WTC11 (cell line): ENCODE measurements at regions of chr6 and their contacts with region 1.

Region 1: GRCh38 chr6:26216356-26216885 is 129.2 kb downstream of the HFE start:
- DNase-seq: no peak
- ATAC-seq: peak; percentile 53
- H3K4me3 Mint-ChIP-seq: no peak overlapping the region
- H3K27ac Mint-ChIP-seq: no peak overlapping the region
- H3K4me1 Mint-ChIP-seq: peaks cover 36% of the 10 kb centered on the region
- H3K27me3 Mint-ChIP-seq: no peaks in the 10 kb centered on the region
- CTCF ChIP-seq: no peak

Region 2: DNA sequence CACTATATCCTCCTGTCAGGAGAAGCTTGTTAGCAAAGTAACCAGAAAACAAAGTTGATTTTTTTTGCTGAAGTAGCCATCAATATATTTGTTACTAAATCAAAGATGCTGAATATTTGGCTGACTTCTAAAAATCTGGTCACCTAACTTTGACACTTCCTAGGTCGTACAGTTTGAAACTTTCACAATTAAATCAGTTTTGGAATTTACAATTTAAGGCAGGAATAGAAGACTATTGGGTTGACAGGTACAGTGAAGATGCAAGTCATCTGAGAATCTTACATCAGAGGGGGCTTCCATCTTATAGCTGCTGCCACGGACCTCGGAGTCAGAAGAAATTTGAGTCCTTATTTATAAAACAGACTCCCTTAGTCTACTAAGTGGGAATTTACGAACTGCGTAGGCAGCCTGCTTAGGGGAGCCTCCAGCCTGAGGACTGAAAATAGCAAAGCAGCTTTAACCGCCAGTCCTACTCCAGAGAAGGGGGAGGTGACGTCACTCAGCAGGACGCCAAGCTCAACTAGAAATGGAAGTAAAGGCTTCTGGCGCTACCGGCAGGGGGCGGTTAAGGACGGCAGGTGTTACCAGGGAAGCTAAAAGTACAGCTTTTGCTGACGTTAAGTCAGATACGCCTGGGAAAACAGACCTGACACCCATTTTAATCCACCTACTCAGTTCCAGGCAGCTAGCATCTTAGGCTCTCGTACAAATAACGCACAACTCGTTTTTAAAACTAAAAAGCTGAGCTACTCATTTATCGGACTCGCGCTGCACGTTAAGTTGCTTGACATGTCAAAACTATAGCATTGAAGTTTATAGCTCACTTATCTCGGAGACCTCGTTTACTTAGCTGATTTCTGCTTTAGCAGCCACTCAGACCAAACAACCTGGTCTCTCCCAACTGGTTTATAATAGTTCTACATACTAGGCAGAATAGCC is 190.3 kb before region 1 on chr6:
- CTCF ChIA-PET with region 1: no interaction called
- POLR2A ChIA-PET with region 1: interaction called, 116 read pairs
- DNase-seq: peak; percentile 95
- ATAC-seq: peak; percentile 12
- H3K4me3 Mint-ChIP-seq: peak overlapping the region; percentile 92
- H3K27ac Mint-ChIP-seq: peak overlapping the region; percentile 98
- H3K4me1 Mint-ChIP-seq: peaks cover 73% of the 10 kb centered on the region
- H3K27me3 Mint-ChIP-seq: no peaks in the 10 kb centered on the region
- CTCF ChIP-seq: peak; percentile 60

Region 3: GRCh38 chr6:26103770-26104456 is 112.5 kb before region 1 on chr6:
- CTCF ChIA-PET with region 1: no interaction called
- POLR2A ChIA-PET with region 1: interaction called, 28 read pairs
- DNase-seq: peak; percentile 73
- ATAC-seq: peak; percentile 79
- H3K4me3 Mint-ChIP-seq: peak overlapping the region; percentile 84
- H3K27ac Mint-ChIP-seq: peak overlapping the region; percentile 98
- H3K4me1 Mint-ChIP-seq: peaks cover 23% of the 10 kb centered on the region
- H3K27me3 Mint-ChIP-seq: no peaks in the 10 kb centered on the region
- CTCF ChIP-seq: no peak

Region 4: DNA sequence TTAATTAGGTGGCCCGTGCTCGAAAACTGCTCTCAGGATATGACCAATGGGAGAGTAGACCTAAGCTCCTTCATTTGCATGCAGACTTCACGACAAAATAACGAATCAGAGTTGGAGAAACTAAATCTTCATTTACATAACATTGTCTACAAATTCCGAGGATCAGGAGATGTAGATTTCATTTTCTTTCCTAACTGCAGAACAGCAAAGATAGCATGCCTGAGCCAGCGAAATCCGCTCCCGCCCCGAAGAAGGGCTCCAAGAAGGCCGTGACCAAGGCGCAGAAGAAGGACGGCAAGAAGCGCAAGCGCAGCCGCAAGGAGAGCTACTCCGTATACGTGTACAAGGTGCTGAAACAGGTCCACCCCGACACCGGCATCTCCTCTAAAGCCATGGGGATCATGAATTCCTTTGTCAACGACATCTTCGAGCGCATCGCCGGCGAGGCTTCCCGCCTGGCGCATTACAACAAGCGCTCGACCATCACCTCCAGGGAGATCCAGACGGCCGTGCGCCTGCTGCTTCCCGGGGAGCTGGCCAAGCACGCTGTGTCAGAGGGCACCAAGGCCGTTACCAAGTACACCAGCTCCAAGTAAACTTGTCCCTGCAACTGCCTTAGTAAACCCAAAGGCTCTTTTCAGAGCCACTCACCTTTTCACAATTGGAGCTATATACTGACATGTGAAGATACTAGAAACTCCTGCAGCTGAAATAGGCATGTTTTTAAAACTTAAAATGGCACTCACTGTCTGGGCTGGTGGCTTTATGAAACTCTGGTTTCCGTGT is 32.6 kb before region 1 on chr6:
- CTCF ChIA-PET with region 1: no interaction called
- POLR2A ChIA-PET with region 1: interaction called, 240 read pairs
- DNase-seq: peak; percentile 74
- ATAC-seq: peak; percentile 78
- H3K4me3 Mint-ChIP-seq: peak overlapping the region; percentile 90
- H3K27ac Mint-ChIP-seq: peak overlapping the region; percentile 99
- H3K4me1 Mint-ChIP-seq: peaks cover 45% of the 10 kb centered on the region
- H3K27me3 Mint-ChIP-seq: no peaks in the 10 kb centered on the region
- CTCF ChIP-seq: no peak

Region 5: GRCh38 chr6:26240154-26241032 is 24.0 kb after region 1 on chr6:
- CTCF ChIA-PET with region 1: no interaction called
- POLR2A ChIA-PET with region 1: interaction called, 216 read pairs
- DNase-seq: peak; percentile 81
- ATAC-seq: peak; percentile 84
- H3K4me3 Mint-ChIP-seq: peak overlapping the region; percentile 75
- H3K27ac Mint-ChIP-seq: peak overlapping the region; percentile 98
- H3K4me1 Mint-ChIP-seq: peaks cover 48% of the 10 kb centered on the region
- H3K27me3 Mint-ChIP-seq: no peaks in the 10 kb centered on the region; the same call in 1 of the 2 replicates
- CTCF ChIP-seq: no peak

Region 6: GRCh38 chr6:27132532-27133280 is 916.3 kb after region 1 on chr6:
- CTCF ChIA-PET with region 1: no interaction called
- POLR2A ChIA-PET with region 1: interaction called, 25 read pairs
- DNase-seq: peak; percentile 85
- ATAC-seq: peak; percentile 86
- H3K4me3 Mint-ChIP-seq: no peak overlapping the region
- H3K27ac Mint-ChIP-seq: no peak overlapping the region
- H3K4me1 Mint-ChIP-seq: peaks cover 65% of the 10 kb centered on the region
- H3K27me3 Mint-ChIP-seq: no peaks in the 10 kb centered on the region
- CTCF ChIP-seq: no peak

Region 7: DNA sequence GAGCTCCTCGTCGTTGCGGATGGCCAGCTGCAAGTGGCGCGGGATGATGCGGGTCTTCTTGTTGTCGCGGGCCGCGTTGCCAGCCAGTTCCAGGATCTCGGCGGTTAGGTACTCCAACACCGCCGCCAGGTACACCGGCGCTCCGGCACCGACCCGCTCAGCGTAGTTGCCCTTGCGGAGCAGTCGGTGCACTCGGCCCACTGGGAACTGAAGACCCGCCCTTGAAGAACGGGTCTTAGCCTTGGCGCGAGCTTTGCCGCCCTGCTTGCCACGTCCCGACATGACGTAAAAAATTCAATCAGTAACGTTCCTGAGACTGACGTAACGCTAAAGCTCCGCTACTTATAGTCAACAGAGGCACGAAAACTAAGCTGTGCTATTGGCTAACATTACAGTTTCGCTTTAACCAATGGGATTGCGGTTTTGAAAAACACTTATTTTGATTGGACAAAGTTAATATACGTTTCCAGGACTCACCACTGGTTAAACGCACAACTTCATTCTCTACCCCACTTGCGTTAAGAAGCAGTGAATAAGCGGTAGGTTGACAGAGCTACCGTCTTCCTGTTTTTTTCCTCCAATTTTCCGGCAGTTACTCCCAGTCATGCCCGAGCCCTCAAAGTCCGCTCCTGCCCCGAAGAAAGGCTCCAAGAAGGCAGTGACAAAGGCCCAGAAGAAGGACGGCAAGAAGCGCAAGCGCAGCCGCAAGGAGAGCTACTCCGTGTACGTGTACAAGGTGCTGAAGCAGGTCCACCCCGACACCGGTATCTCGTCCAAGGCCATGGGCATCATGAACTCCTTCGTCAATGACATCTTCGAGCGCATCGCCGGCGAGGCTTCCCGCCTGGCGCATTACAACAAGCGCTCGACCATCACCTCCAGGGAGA is 1621.9 kb after region 1 on chr6:
- CTCF ChIA-PET with region 1: no interaction called
- POLR2A ChIA-PET with region 1: interaction called, 27 read pairs
- DNase-seq: peak; percentile 84
- ATAC-seq: peak; percentile 84
- H3K4me3 Mint-ChIP-seq: no peak overlapping the region
- H3K27ac Mint-ChIP-seq: no peak overlapping the region
- H3K4me1 Mint-ChIP-seq: peaks cover 28% of the 10 kb centered on the region
- H3K27me3 Mint-ChIP-seq: no peaks in the 10 kb centered on the region
- CTCF ChIP-seq: no peak